IMR-90 (cell line): ENCODE measurements at regions of chr3 and their contacts with region 1.

Region 1: GRCh38 chr3:111691293-111691909 is 96.3 kb upstream of the ZBED2 start:
- DNase-seq: peak; percentile 76
- ATAC-seq: peak; percentile 64
- H3K4me3 ChIP-seq: no peak overlapping the region
- H3K27ac ChIP-seq: no peak overlapping the region
- H3K4me1 ChIP-seq: peaks cover 3% of the 10 kb centered on the region; the same call in 1 of the 2 replicates
- H3K27me3 ChIP-seq: no peaks in the 10 kb centered on the region
- CTCF ChIP-seq: peak; percentile 67
- POLR2A ChIP-seq: no peak
- RAD21 ChIP-seq: peak; percentile 77

Region 2: GRCh38 chr3:111594205-111594604 is 97.2 kb before region 1 on chr3:
- CTCF ChIA-PET with region 1: no interaction called
- POLR2A ChIA-PET with region 1: no interaction called
- dilution Hi-C with region 1: no loop called
- in situ Hi-C with region 1: no loop called
- intact Hi-C with region 1: no loop called
- DNase-seq: peak; percentile 91
- ATAC-seq: peak; percentile 83
- H3K4me3 ChIP-seq: no peak overlapping the region
- H3K27ac ChIP-seq: peak overlapping the region; percentile 47
- H3K4me1 ChIP-seq: peaks cover 24% of the 10 kb centered on the region
- H3K27me3 ChIP-seq: no peaks in the 10 kb centered on the region
- CTCF ChIP-seq: no peak
- POLR2A ChIP-seq: no peak
- RAD21 ChIP-seq: no peak

Region 3: GRCh38 chr3:111668912-111669488 is 22.4 kb before region 1 on chr3:
- CTCF ChIA-PET with region 1: interaction called, 19 read pairs
- POLR2A ChIA-PET with region 1: no interaction called
- dilution Hi-C with region 1: no loop called
- in situ Hi-C with region 1: no loop called
- intact Hi-C with region 1: loop called (anchors 1 kb)
- DNase-seq: peak; percentile 76
- ATAC-seq: peak; percentile 76
- H3K4me3 ChIP-seq: no peak overlapping the region
- H3K27ac ChIP-seq: no peak overlapping the region
- H3K4me1 ChIP-seq: peaks cover 5% of the 10 kb centered on the region
- H3K27me3 ChIP-seq: no peaks in the 10 kb centered on the region
- CTCF ChIP-seq: peak; percentile 88
- POLR2A ChIP-seq: no peak
- RAD21 ChIP-seq: peak; percentile 87

Region 4: GRCh38 chr3:112280266-112280665 is 588.9 kb after region 1 on chr3:
- CTCF ChIA-PET with region 1: no interaction called
- POLR2A ChIA-PET with region 1: no interaction called
- dilution Hi-C with region 1: no loop called
- in situ Hi-C with region 1: no loop called
- intact Hi-C with region 1: no loop called
- DNase-seq: no peak
- ATAC-seq: no peak
- H3K4me3 ChIP-seq: no peak overlapping the region
- H3K27ac ChIP-seq: no peak overlapping the region
- H3K4me1 ChIP-seq: no peaks in the 10 kb centered on the region
- H3K27me3 ChIP-seq: peaks cover 16% of the 10 kb centered on the region; the same call in 1 of the 2 replicates
- CTCF ChIP-seq: no peak
- POLR2A ChIP-seq: no peak
- RAD21 ChIP-seq: no peak